Mammary epithelial cell (primary cell): ENCODE measurements at regions of chr6 and their contacts with region 1.

Region 1: DNA sequence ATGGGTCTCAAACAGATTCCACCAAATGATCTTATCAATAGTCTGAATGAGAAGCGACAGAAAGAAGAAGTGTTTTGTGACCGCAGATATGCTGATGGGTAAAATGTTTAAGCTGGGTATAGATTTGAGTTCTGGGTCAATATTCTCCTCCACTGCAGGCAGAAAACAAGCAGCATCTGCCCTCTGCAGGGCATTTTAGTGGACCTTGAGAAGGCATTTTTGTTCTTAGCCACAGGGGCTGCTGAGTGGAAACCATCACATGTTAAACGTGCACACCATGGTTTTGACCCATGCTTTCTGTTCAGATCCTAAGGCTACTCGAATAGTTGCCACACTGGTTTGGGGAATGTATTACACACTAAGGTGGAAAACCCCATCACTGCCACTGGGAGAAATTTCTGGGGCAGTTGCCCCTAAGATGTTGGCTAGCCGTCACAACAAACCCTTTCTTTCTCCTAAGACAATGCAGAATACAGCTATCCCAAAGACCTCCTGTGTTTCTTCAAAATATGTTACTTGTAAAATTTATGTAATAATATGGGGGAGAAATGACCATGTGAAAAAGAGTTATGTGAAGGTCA is 5.5 kb downstream of the POU3F2 start:
- DNase-seq: no peak
- H3K4me3 ChIP-seq: no peak overlapping the region
- H3K27ac ChIP-seq: no peak overlapping the region
- H3K4me1 ChIP-seq: peaks cover 10% of the 10 kb centered on the region
- H3K27me3 ChIP-seq: peaks cover 79% of the 10 kb centered on the region
- CTCF ChIP-seq: peak; percentile 16 to 48

Region 2: DNA sequence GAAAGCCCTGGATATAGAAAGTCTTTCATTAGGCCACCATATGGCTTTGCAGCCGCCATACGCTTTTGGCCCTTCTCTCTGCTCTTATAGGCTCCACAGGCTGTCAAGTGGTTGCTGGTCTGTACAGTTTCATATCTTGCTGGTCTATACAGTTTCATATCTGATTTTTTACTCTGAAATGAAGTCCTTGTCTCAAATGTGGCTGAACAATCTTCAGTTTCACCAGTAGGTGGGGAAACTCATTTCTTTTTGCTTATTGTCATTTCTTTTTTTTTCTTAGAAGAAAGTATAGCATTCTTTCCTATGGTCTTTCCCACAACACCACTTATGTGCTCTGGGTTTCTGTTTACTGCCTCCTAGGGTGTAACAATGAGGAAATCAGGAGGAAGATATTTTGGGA is 785.4 kb before region 1 on chr6:
- CTCF ChIA-PET with region 1: no interaction called
- dilution Hi-C with region 1: no loop called
- in situ Hi-C with region 1: no loop called
- intact Hi-C with region 1: loop called (anchors 1 kb)
- DNase-seq: peak; percentile 6
- H3K4me3 ChIP-seq: no peak overlapping the region
- H3K27ac ChIP-seq: no peak overlapping the region
- H3K4me1 ChIP-seq: no peaks in the 10 kb centered on the region
- H3K27me3 ChIP-seq: no peaks in the 10 kb centered on the region
- CTCF ChIP-seq: peak; percentile 35 to 59

Region 3: GRCh38 chr6:98605705-98606104 is 234.2 kb before region 1 on chr6:
- CTCF ChIA-PET with region 1: no interaction called
- dilution Hi-C with region 1: no loop called
- in situ Hi-C with region 1: no loop called
- intact Hi-C with region 1: no loop called
- DNase-seq: no peak
- H3K4me3 ChIP-seq: no peak overlapping the region
- H3K27ac ChIP-seq: no peak overlapping the region
- H3K4me1 ChIP-seq: no peaks in the 10 kb centered on the region
- H3K27me3 ChIP-seq: no peaks in the 10 kb centered on the region
- CTCF ChIP-seq: no peak

Region 4: GRCh38 chr6:98769544-98769943 is 70.3 kb before region 1 on chr6:
- CTCF ChIA-PET with region 1: no interaction called
- dilution Hi-C with region 1: no loop called
- in situ Hi-C with region 1: no loop called
- intact Hi-C with region 1: loop called (anchors 1 kb)
- DNase-seq: peak; percentile 20
- H3K4me3 ChIP-seq: no peak overlapping the region
- H3K27ac ChIP-seq: no peak overlapping the region
- H3K4me1 ChIP-seq: no peaks in the 10 kb centered on the region
- H3K27me3 ChIP-seq: no peaks in the 10 kb centered on the region
- CTCF ChIP-seq: peak in 1 of 2 donors; percentile 52

Region 5: DNA sequence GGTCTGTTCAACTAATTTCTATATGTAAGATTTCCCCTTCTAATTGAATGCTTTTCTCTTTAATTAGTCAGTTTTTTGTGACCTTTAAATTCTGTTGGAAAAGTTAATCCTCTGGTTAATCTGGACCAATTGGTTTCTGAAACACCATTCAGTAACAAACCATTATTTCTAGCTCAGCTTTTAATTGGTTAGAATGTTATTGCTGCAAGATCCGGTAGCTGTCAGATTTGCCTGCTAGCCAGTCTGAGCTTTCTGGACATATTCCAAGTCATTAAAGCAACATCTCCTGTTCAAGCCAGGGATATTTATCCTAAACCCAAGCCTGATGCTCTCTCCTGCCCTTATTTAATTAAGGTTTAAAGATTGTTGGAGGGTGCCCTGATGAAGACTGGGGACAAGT is 163.0 kb after region 1 on chr6:
- CTCF ChIA-PET with region 1: no interaction called
- dilution Hi-C with region 1: no loop called
- in situ Hi-C with region 1: no loop called
- intact Hi-C with region 1: no loop called
- DNase-seq: no peak
- H3K4me3 ChIP-seq: no peak overlapping the region
- H3K27ac ChIP-seq: no peak overlapping the region
- H3K4me1 ChIP-seq: no peaks in the 10 kb centered on the region
- H3K27me3 ChIP-seq: no peaks in the 10 kb centered on the region
- CTCF ChIP-seq: no peak